A673 (cell line): ENCODE measurements at regions of chr3 and their contacts with region 1.

Region 1: DNA sequence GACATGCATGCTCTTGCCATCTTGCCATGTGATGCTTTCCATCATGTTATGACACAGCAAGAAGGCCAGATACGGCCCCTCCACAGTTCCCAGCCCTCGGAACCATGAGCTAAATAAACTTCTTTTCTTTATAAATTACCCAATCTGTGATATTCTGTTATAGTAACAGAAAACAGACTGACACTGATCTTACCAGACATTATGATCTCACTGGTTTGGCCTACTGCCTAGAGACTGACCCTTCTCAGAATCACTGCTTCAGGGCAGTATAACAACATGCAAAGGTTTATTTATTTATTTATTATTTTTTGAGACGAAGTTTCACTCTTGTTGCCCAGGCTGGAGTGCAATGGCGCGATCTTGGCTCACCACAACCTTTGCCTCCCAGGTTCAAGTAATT is 14.0 kb downstream of the ZNF619 start:
- DNase-seq: no peak
- H3K4me3 ChIP-seq: no peak overlapping the region
- H3K27ac ChIP-seq: no peak overlapping the region
- H3K4me1 ChIP-seq: no peaks in the 10 kb centered on the region
- H3K27me3 ChIP-seq: no peaks in the 10 kb centered on the region
- CTCF ChIP-seq: no peak

Region 2: DNA sequence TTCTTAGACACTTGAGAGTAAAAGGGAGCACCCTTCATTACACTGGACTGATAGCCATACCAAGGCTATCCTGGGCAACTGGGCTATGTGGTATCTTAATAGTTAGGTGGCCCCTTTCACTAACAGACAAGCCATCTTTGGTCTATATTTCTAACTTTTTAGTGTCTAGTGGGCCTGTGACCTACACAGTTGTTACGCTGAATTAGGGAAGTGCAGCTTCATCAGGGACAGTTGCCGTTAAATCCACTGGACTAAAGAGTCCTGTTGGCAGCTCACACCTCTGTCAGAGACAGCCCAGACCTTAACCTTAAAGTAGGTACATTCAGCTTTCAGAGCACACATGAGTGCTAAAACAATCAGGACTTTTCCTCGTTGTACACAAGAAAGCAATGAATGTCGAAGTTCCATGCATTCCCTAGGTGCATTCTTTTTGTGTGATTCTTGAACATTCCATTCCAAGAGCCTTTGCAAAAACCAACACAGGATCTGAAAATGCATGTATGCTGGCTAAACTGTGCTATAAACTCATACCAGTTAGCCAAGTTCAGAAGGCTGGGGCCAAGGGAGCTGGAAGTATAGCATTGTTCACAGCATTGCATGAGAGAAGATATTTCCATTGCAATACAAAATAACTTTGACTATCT is 411.6 kb before region 1 on chr3:
- CTCF ChIA-PET with region 1: no interaction called
- POLR2A ChIA-PET with region 1: no interaction called
- intact Hi-C with region 1: no loop called
- DNase-seq: no peak
- H3K4me3 ChIP-seq: no peak overlapping the region
- H3K27ac ChIP-seq: no peak overlapping the region
- H3K4me1 ChIP-seq: no peaks in the 10 kb centered on the region
- H3K27me3 ChIP-seq: no peaks in the 10 kb centered on the region
- CTCF ChIP-seq: no peak

Region 3: DNA sequence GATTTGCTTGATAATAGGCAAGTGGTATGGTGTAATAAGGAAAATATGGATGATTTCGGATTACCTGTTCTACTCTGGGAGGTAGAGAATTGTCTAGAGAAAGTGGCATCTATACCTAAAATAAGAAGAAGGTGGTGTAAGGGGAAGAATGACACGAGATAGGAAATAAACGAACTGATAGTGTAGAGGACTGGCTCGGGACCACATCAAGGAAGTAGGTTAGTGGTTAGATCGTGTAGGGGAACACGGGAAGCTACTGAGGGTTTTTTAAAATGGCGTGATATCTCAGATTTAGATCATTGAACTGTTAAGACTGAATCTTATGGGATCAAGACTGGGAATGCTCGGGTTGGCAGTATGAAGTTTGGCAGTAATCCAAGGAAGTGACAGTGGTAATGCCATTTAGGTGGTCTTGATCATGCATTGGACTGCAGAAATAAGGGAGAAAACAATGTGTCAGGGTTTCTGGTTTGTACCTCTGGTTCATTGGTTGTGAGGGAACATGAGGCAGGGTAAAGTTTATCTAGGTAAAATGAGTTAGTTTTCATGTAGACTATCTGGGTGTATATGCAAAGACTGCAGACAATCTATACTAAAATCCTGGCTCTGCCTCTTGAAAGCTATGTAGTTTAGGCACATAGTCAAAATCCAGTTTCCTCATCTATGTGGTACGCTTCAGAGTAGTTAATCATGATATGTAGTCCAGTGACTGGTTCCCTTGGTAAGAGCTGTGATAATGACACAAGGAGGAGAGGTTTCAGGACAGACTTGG is 26.4 kb before region 1 on chr3:
- CTCF ChIA-PET with region 1: no interaction called
- POLR2A ChIA-PET with region 1: interaction called, 11 read pairs
- intact Hi-C with region 1: no loop called
- DNase-seq: no peak
- H3K4me3 ChIP-seq: no peak overlapping the region
- H3K27ac ChIP-seq: no peak overlapping the region
- H3K4me1 ChIP-seq: no peaks in the 10 kb centered on the region
- H3K27me3 ChIP-seq: no peaks in the 10 kb centered on the region
- CTCF ChIP-seq: no peak

Region 4: DNA sequence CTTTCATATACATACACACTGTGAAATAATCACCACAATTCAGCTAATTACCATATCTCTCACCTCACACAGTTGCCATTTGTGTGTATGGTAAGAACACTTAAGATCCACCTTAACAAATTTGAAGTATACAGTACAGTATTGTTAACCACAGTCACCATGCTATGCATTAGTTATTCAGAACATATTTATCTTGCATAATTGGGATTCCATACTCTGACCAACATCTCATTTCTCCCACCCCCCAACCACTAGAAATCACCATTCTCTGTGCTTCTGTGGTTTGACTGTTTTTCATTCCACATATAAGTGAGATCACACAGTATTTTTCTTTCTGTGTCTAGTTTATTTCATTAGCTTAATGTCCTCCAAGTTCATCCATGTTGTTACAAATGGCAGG is 460.7 kb after region 1 on chr3:
- CTCF ChIA-PET with region 1: no interaction called
- POLR2A ChIA-PET with region 1: no interaction called
- intact Hi-C with region 1: no loop called
- DNase-seq: no peak
- H3K4me3 ChIP-seq: no peak overlapping the region
- H3K27ac ChIP-seq: no peak overlapping the region
- H3K4me1 ChIP-seq: no peaks in the 10 kb centered on the region
- H3K27me3 ChIP-seq: no peaks in the 10 kb centered on the region
- CTCF ChIP-seq: no peak